GM10248 (cell line): ENCODE measurements at regions of chr12 and their contacts with region 1.

Region 1: GRCh38 chr12:105352940-105353635 is 22.6 kb downstream of the C12orf75 start:
- DNase-seq: no peak
- CTCF ChIP-seq: no peak

Region 2: GRCh38 chr12:105235732-105236476 is 117.2 kb before region 1 on chr12 and contains the start of gene APPL2:
- CTCF ChIA-PET with region 1: no interaction called
- POLR2A ChIA-PET with region 1: no interaction called
- DNase-seq: peak; percentile 93
- CTCF ChIP-seq: no peak

Region 3: DNA sequence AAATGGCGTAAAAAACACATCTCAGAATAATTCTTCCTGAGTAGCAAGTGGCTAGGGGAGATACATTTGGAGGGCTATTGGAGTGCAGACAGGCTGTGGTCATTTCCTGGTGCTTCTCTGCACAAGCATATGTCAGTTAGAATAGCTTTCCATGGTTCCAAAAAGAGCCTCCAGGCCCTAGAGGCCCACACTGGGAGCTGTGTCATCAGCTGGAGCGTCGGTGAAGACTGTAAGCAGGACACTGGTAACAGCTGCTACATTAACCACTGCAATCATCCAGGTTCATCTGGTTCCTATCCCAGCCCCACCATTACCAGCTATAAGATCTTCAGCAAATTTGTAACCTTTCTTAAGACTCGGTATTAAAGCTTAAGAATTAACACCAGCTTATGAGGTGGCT is 85.4 kb before region 1 on chr12:
- CTCF ChIA-PET with region 1: no interaction called
- POLR2A ChIA-PET with region 1: no interaction called
- DNase-seq: no peak
- CTCF ChIP-seq: no peak

Region 4: DNA sequence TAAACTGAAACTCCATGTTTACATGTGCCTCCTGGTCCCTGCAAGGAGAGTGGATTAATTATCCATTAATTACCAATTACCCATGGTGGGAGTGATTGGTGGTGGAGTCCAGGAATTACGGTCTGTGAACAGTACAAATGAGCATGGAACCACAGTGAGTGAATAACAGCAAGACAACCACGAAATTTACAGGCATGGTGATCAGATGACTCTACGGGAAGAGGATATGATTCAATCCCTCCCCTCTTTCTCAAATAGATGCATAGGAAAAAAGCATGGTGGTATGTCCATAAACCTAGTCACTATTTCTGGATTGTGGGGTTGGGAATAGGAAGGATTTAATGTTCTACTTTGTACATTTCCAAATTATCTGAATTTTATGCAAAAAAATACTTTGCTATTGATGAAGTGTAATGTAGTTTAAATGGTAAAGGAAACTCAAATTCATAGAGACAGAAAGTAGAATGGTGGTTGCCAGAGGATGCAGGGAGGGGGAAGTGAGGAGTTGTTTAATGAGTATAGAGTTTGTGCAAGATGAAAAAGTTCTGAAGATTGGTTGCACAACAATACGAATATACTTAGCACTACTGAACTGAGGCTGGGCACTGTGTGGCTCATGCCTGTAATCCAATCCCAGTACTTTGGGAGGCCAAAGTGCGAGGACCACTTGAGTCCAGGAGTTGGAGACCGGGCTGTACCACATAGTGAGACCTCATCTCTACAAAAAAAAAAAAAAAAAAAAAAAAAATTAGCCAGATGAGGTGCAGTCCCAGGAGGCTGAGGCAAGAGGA is 63.8 kb before region 1 on chr12:
- CTCF ChIA-PET with region 1: no interaction called
- POLR2A ChIA-PET with region 1: no interaction called
- DNase-seq: no peak
- CTCF ChIP-seq: no peak

Region 5: DNA sequence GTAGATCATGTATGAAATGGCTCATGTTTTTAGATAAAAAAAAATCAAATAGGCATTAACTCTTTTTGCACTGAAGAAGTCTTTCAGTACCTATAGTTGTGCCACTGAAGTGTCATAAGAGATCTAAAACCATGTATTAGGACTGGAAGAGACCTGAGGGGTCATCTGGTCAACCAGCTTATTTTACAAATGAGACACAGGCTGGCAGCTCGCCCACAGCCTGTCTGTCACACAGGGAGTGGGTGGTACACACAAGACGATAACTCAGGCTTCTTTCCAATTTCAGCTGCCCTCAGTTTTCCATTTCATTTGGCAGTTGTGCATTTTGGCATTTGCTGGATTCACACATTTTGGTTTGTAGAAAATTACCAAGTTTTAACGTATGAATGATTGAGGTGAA is 12.1 kb after region 1 on chr12:
- CTCF ChIA-PET with region 1: interaction called, 16 read pairs
- POLR2A ChIA-PET with region 1: no interaction called
- DNase-seq: no peak
- CTCF ChIP-seq: no peak